ENCODE measurements at regions of chr17 and their contacts with region 1.

Region 1: GRCh38 chr17:45148183-45149036 is at the start of gene HEXIM1:
- DNase-seq: peak; percentile 96
- H3K4me3 ChIP-seq: peak within 1 kb of the TSS; percentile 91
- H3K27me3 ChIP-seq: no peaks in the 10 kb centered on the region
- CTCF ChIP-seq: no peak
- polyA plus RNA-seq, gene HEXIM1: 16.0 and 16.7 TPM in 2 replicates

Region 2: GRCh38 chr17:44988044-44988942 is 160.1 kb before region 1 on chr17:
- CTCF ChIA-PET with region 1: no interaction called
- POLR2A ChIA-PET with region 1: no interaction called
- DNase-seq: no peak
- H3K4me3 ChIP-seq: no peak overlapping the region
- H3K27me3 ChIP-seq: peaks cover 6% of the 10 kb centered on the region
- CTCF ChIP-seq: no peak

Region 3: GRCh38 chr17:45161019-45161825 is 12.8 kb after region 1 on chr17:
- CTCF ChIA-PET with region 1: interaction called, 83 read pairs
- POLR2A ChIA-PET with region 1: interaction called, 66 read pairs
- DNase-seq: peak; percentile 99
- H3K4me3 ChIP-seq: peak overlapping the region; percentile 81
- H3K27me3 ChIP-seq: no peaks in the 10 kb centered on the region
- CTCF ChIP-seq: no peak

Region 4: GRCh38 chr17:45172454-45173286 is 24.3 kb after region 1 on chr17:
- CTCF ChIA-PET with region 1: interaction called, 62 read pairs
- POLR2A ChIA-PET with region 1: interaction called, 5 read pairs
- DNase-seq: peak; percentile 26
- H3K4me3 ChIP-seq: peak overlapping the region; percentile 24
- H3K27me3 ChIP-seq: no peaks in the 10 kb centered on the region
- CTCF ChIP-seq: peak; percentile 11; the same call in 1 of the 2 replicates

Region 5: DNA sequence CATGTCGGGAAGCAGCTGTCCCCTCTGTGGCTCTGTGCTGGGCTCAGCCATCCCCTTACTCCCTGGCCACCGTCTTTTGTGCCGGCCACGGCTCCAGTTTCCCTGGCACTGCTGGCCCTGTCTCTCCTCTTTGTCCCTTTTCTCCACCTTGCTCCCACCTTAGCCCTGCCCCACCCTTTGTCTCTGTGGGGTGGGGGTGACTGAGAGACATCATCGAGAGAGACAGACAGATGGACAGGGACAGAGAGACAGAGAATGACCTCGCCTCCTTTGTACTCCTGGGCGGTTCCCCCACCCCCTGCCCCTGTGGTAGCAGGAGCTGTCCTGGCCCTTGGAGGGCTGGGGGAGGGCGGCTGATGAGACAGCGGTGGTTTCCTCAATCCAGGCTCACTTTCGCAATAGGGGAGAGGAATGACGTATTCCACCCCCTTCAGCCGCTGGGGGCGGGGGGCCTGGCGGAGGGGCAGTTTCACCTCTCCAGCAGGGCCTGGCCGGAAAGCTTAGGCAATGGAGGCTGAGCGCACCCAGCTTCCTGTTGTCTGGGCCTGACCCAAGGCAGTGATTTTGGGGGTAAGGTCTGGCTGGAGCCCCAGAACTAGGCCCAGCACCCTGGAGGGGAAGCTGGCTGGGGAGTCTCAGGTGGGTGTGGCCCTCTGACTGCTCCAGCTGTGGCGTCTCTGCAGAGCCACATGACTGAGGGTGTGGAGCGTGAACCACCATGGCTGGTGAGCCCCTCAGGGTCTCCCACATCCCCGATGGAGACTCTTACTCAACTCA is 80.5 kb after region 1 on chr17:
- CTCF ChIA-PET with region 1: interaction called, 14 read pairs
- POLR2A ChIA-PET with region 1: interaction called, 3 read pairs
- DNase-seq: no peak
- H3K4me3 ChIP-seq: no peak overlapping the region
- H3K27me3 ChIP-seq: no peaks in the 10 kb centered on the region
- CTCF ChIP-seq: no peak